H1 (cell line): ENCODE measurements at regions of chr17 and their contacts with region 1.

Region 1: GRCh38 chr17:31558748-31559644 is 167.5 kb downstream of the RAB11FIP4 start:
- DNase-seq: peak in 1 of 2 experiments; percentile 88
- H3K4me3 ChIP-seq: peak overlapping the region; percentile 33 to 74 (median 44); a peak in 7 of 8 replicates
- H3K27ac ChIP-seq: no peak overlapping the region
- H3K4me1 ChIP-seq: peaks cover 8 to 21% (median 15%) of the 10 kb centered on the region in 4 experiments
- H3K27me3 ChIP-seq: peaks cover 6 to 54% (median 32%) of the 10 kb centered on the region in 4 experiments; a peak in 6 of 7 replicates
- CTCF ChIP-seq: peak; percentile 61 to 93 (median 66)
- EP300 ChIP-seq: no peak
- POLR2A ChIP-seq: no peak
- RAD21 ChIP-seq: peak; percentile 49 to 82

Region 2: GRCh38 chr17:31533546-31534155 is 25.3 kb before region 1 on chr17:
- CTCF ChIA-PET with region 1: interaction called, 11 read pairs
- POLR2A ChIA-PET with region 1: interaction called, 4 read pairs
- DNase-seq: peak in 1 of 2 experiments; percentile 79
- H3K4me3 ChIP-seq: no peak overlapping the region
- H3K27ac ChIP-seq: no peak overlapping the region
- H3K4me1 ChIP-seq: peaks cover 0 to 4% (median 2%) of the 10 kb centered on the region in 4 experiments; a peak in 2 of 7 replicates
- H3K27me3 ChIP-seq: no peaks in the 10 kb centered on the region
- CTCF ChIP-seq: peak; percentile 65 to 67 (median 65)
- EP300 ChIP-seq: no peak
- POLR2A ChIP-seq: no peak
- RAD21 ChIP-seq: peak; percentile 70 to 84

Region 3: DNA sequence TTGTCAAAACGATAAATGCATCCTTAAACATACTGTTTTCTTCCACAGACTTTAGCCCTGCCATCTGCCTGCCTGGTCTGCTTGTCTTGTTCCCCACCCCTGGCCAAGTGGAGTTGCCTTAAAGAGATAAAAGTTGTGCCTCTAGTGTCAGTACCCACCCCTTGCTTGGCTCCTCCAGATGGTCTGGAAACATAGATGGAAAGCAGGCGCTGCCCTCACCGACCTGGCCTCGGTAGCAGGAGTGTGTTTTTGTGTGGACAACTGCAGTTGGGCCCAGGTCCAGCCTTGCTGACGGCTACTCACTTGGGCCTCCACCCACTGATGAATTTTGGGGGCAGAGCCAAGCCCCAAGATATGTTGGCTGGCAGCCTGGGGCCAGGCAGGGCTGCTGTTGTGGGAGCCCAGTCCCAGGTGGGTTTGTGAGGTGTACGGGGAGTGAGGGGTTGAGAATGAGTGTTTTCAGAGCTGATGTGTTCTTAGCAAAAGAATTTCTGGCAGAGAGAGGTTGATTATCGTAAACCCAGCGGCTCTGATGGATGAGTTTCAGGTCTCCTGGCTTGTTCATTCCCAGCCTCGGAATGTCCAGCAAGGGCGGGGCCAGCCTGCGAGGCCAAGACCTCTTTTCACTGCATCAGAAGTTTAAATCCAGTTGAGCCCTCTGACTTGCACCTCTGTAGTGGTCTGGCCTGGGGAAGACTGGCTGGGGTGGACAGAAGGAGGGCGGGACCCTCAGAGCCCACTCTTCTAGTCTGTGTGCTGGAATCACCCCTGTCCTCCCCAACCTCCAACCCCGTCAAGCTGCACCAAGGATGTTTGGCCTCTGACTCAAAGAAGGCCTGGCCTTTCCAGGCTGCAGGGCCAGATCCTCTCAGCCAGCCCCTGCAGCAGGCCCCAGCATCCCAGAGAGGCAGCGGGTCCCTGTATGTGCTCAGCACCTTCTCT is 12.2 kb after region 1 on chr17:
- CTCF ChIA-PET with region 1: interaction called, 10 read pairs
- POLR2A ChIA-PET with region 1: no interaction called
- DNase-seq: no peak
- H3K4me3 ChIP-seq: no peak overlapping the region
- H3K27ac ChIP-seq: no peak overlapping the region
- H3K4me1 ChIP-seq: peaks cover 0 to 2% (median 0%) of the 10 kb centered on the region in 4 experiments; a peak in 1 of 7 replicates
- H3K27me3 ChIP-seq: no peaks in the 10 kb centered on the region
- CTCF ChIP-seq: no peak
- EP300 ChIP-seq: no peak
- POLR2A ChIP-seq: no peak
- RAD21 ChIP-seq: no peak